AG04450 (cell line): ENCODE measurements at regions of chr3 and their contacts with region 1.

Region 1: GRCh38 chr3:12484198-12484974 is at the start of gene TSEN2:
- DNase-seq: peak; percentile 88
- H3K4me3 ChIP-seq: peak within 1 kb of the TSS; percentile 87
- H3K27ac ChIP-seq: peak within 1 kb of the TSS; percentile 52
- H3K27me3 ChIP-seq: no peaks in the 10 kb centered on the region
- CTCF ChIP-seq: peak; percentile 39
- polyA plus RNA-seq, gene TSEN2: 8.9 and 11.0 TPM in 2 replicates

Region 2: GRCh38 chr3:12143949-12144504 is 340.4 kb before region 1 on chr3:
- CTCF ChIA-PET with region 1: interaction called, 353 read pairs
- POLR2A ChIA-PET with region 1: no interaction called
- DNase-seq: peak; percentile 66
- H3K4me3 ChIP-seq: no peak overlapping the region
- H3K27ac ChIP-seq: no peak overlapping the region
- H3K27me3 ChIP-seq: peaks cover 3% of the 10 kb centered on the region
- CTCF ChIP-seq: no peak

Region 3: GRCh38 chr3:12175844-12176453 is 308.4 kb before region 1 on chr3:
- CTCF ChIA-PET with region 1: interaction called, 94 read pairs
- POLR2A ChIA-PET with region 1: no interaction called
- DNase-seq: no peak
- H3K4me3 ChIP-seq: no peak overlapping the region
- H3K27ac ChIP-seq: no peak overlapping the region
- H3K27me3 ChIP-seq: no peaks in the 10 kb centered on the region
- CTCF ChIP-seq: peak; percentile 90

Region 4: DNA sequence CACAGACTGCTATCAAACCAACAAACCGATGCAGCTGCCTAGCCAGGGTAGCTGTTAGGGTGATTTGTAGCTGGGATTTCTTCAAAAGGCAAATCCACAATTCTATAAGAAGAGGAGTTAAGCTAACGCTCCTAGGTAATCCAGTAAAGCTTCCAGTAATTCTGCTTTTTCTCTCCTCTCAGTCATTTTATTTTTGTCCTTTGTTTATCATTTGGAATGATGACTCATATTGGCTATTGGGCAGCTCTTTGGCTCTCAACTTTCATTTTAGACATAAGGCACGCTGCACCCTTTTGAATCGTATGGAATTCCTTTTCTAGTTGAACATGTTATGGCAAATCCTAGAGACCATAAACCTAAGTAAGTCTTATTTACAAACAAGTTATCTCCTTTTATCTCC is 248.7 kb before region 1 on chr3:
- CTCF ChIA-PET with region 1: interaction called, 13 read pairs
- POLR2A ChIA-PET with region 1: no interaction called
- DNase-seq: no peak
- H3K4me3 ChIP-seq: peak overlapping the region; percentile 45
- H3K27ac ChIP-seq: peak overlapping the region; percentile 58
- H3K27me3 ChIP-seq: no peaks in the 10 kb centered on the region
- CTCF ChIP-seq: no peak

Region 5: DNA sequence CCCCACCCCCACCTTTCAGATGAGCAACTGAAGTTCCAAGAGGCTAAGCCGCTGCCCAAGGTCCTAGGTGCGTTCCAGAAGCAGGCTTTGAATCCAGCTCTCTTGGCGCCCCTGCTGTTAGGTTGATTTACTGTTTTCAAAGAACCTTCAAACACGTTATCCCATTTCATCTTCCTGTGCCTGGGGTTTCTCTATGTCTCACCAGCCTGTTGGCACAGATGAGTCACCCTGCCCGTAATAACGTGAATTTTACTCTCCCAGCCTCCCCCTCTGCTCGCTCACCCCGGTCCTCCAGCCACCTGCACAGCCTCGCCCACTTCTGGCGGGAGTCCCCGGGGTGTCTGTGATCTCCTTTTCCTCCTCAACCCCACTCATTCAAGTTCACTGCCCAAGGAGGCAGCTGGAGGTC is 13.1 kb before region 1 on chr3:
- CTCF ChIA-PET with region 1: interaction called, 19 read pairs
- POLR2A ChIA-PET with region 1: interaction called, 4 read pairs
- DNase-seq: no peak
- H3K4me3 ChIP-seq: no peak overlapping the region
- H3K27ac ChIP-seq: no peak overlapping the region
- H3K27me3 ChIP-seq: peaks cover 3% of the 10 kb centered on the region
- CTCF ChIP-seq: no peak

Region 6: DNA sequence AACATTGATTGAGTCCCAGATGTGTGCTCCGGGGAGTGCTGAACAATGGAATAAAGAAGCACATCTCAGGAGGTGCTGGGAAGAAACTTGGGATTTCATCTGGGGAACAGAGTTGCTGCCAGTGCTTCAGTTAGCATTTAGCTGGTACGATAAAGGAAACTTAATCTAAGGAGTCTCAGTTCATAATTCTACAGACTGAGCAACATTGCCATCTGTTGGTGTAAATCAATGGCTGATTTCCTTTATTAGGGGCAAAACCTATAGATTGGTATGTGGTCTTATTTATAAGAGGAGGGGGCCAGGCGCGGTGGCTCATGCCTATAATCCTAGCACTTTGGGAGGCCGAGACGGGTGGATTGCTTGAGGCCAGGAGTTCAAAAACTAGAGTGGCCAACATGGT is 52.0 kb after region 1 on chr3:
- CTCF ChIA-PET with region 1: interaction called, 22 read pairs
- POLR2A ChIA-PET with region 1: no interaction called
- DNase-seq: no peak
- H3K4me3 ChIP-seq: no peak overlapping the region
- H3K27ac ChIP-seq: no peak overlapping the region
- H3K27me3 ChIP-seq: no peaks in the 10 kb centered on the region
- CTCF ChIP-seq: peak; percentile 56